MCF 10A (cell line): ENCODE measurements at regions of chr5 and their contacts with region 1.

Region 1: GRCh38 chr5:170434966-170435605 is 45.9 kb upstream of the KCNMB1 start:
- DNase-seq: peak; percentile 74
- H3K4me3 Mint-ChIP-seq: no peak overlapping the region
- H3K27ac Mint-ChIP-seq: no peak overlapping the region
- H3K4me1 Mint-ChIP-seq: no peaks in the 10 kb centered on the region
- H3K27me3 Mint-ChIP-seq: peaks cover 23% of the 10 kb centered on the region
- CTCF ChIP-seq: peak; percentile 99

Region 2: DNA sequence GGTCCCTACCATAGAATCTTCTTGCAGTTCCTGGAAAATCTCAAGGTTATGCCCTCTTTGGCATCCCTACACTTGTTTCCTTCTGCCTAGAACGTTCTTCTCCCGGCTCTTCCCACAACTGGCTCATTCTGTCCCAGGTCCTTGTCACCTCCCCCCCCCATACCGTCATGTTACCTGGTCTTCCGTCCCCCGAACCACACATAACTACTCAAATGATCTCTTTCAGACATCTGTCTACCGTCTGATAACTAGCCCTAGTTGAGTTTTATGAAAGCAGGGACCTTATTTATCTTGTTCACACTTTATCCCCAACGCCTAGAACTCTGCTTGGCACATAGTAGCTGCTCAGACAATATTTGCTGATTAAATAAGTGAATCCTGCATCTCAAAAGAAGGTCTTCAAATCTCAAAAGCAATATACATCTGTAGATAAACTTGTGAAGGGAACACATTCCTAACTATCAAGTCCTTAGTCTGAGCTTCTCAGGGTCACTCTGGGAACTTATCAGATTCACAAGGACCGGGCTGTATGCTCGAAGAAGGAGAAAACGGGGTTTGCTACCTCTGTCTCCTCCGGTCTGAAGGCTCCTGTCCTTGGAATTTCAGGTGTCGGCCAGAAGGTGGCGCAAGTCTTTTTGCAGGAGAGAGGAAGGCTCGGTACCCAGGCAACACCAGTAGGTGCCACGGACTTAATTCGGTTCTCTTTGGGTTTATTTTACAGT is 167.5 kb before region 1 on chr5:
- CTCF ChIA-PET with region 1: interaction called, 20 read pairs
- POLR2A ChIA-PET with region 1: no interaction called
- intact Hi-C with region 1: no loop called
- DNase-seq: peak; percentile 90
- H3K4me3 Mint-ChIP-seq: no peak overlapping the region
- H3K27ac Mint-ChIP-seq: no peak overlapping the region
- H3K4me1 Mint-ChIP-seq: peaks cover 6% of the 10 kb centered on the region
- H3K27me3 Mint-ChIP-seq: peaks cover 47% of the 10 kb centered on the region
- CTCF ChIP-seq: peak; percentile 91

Region 3: DNA sequence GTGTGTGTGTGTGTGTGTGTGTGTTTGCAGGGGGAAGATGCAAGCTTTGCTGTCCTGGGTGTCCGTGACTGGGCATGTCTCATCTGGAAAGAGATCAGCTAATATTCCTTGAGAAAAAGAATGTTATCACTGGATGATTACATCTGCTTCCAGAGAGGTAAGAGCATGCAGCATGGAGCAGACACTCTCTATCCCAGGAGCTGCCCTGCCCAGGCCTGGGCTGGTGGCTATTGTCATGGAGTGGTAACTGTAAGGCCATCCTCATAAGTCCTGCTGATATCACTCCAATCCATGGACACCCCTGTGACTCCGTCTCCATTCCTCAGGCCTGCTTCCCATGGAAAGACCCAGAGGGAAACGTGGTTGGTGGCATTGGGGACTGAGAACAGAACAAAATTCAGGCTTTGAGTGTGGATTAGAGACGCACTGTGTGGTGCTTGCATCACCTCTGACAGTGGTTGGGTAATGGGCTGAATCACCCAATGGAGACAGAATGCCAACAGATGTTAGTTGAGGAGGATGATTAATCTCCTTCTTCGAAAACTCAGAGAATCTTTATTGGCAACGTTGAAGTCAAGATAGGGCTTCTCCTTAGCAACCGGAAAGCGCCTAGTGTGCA is 16.8 kb after region 1 on chr5:
- CTCF ChIA-PET with region 1: interaction called, 137 read pairs
- POLR2A ChIA-PET with region 1: interaction called, 3 read pairs
- intact Hi-C with region 1: no loop called
- DNase-seq: peak; percentile 95
- H3K4me3 Mint-ChIP-seq: no peak overlapping the region
- H3K27ac Mint-ChIP-seq: no peak overlapping the region
- H3K4me1 Mint-ChIP-seq: peaks cover 9% of the 10 kb centered on the region
- H3K27me3 Mint-ChIP-seq: no peaks in the 10 kb centered on the region
- CTCF ChIP-seq: no peak

Region 4: DNA sequence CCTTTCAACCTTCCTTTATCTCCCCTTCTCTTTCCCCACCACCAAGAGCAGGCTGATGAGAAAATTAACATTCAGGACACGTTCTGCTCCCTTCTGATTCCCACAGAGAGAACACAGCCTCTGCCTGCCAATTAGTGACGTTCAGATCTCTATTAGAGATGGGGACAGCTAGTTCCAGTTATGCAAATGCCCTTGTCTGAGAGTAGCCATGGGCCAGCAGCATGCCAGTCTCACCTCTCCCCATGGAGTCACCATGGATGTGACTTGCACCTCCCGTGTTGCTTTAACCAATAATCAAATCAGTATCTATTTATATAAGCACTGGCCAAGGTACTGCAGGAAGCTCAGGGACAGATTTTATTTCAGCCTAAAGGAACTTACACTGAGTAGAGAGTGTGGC is 130.0 kb after region 1 on chr5:
- CTCF ChIA-PET with region 1: interaction called, 18 read pairs
- POLR2A ChIA-PET with region 1: no interaction called
- intact Hi-C with region 1: loop called (anchors 5 kb)
- DNase-seq: no peak
- H3K4me3 Mint-ChIP-seq: no peak overlapping the region
- H3K27ac Mint-ChIP-seq: no peak overlapping the region
- H3K4me1 Mint-ChIP-seq: no peaks in the 10 kb centered on the region
- H3K27me3 Mint-ChIP-seq: peaks cover 85% of the 10 kb centered on the region
- CTCF ChIP-seq: no peak

Region 5: GRCh38 chr5:170597109-170597751 is 162.1 kb after region 1 on chr5:
- CTCF ChIA-PET with region 1: interaction called, 65 read pairs
- POLR2A ChIA-PET with region 1: no interaction called
- intact Hi-C with region 1: no loop called
- DNase-seq: peak; percentile 72
- H3K4me3 Mint-ChIP-seq: peak overlapping the region; percentile 20
- H3K27ac Mint-ChIP-seq: no peak overlapping the region
- H3K4me1 Mint-ChIP-seq: peaks cover 17% of the 10 kb centered on the region
- H3K27me3 Mint-ChIP-seq: peaks cover 31% of the 10 kb centered on the region
- CTCF ChIP-seq: no peak

Region 6: DNA sequence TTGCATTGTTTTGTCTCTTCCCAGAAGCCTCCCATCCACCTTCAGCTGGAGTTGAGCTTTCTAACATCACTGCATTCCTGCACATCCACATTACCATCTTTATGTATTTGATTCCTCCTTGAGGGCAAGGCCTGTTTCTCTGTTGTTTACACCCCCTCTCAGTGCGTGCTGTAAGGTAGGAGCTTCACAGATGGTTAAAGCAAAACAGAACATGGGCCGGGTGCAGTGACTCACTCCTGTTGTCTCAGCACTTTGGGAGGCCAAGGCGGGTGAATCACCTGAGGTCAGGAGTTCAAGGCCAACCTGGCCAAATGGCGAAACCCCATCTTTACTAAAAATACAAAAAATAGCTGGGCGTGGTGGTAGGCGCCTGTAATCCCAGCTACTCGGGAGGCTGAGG is 179.6 kb after region 1 on chr5:
- CTCF ChIA-PET with region 1: interaction called, 418 read pairs
- POLR2A ChIA-PET with region 1: no interaction called
- intact Hi-C with region 1: no loop called
- DNase-seq: peak; percentile 98
- H3K4me3 Mint-ChIP-seq: peak overlapping the region; percentile 56
- H3K27ac Mint-ChIP-seq: peak overlapping the region; percentile 87
- H3K4me1 Mint-ChIP-seq: peaks cover 22% of the 10 kb centered on the region
- H3K27me3 Mint-ChIP-seq: peaks cover 22% of the 10 kb centered on the region
- CTCF ChIP-seq: no peak

Region 7: GRCh38 chr5:170633235-170634081 is 198.4 kb after region 1 on chr5:
- CTCF ChIA-PET with region 1: interaction called, 418 read pairs
- POLR2A ChIA-PET with region 1: no interaction called
- intact Hi-C with region 1: loop called (anchors 2 kb)
- DNase-seq: peak; percentile 82
- H3K4me3 Mint-ChIP-seq: peak overlapping the region; percentile 65
- H3K27ac Mint-ChIP-seq: peak overlapping the region; percentile 17
- H3K4me1 Mint-ChIP-seq: peaks cover 20% of the 10 kb centered on the region
- H3K27me3 Mint-ChIP-seq: peaks cover 15% of the 10 kb centered on the region
- CTCF ChIP-seq: no peak